ENCODE measurements at regions of chr10 and their contacts with region 1.

Region 1: DNA sequence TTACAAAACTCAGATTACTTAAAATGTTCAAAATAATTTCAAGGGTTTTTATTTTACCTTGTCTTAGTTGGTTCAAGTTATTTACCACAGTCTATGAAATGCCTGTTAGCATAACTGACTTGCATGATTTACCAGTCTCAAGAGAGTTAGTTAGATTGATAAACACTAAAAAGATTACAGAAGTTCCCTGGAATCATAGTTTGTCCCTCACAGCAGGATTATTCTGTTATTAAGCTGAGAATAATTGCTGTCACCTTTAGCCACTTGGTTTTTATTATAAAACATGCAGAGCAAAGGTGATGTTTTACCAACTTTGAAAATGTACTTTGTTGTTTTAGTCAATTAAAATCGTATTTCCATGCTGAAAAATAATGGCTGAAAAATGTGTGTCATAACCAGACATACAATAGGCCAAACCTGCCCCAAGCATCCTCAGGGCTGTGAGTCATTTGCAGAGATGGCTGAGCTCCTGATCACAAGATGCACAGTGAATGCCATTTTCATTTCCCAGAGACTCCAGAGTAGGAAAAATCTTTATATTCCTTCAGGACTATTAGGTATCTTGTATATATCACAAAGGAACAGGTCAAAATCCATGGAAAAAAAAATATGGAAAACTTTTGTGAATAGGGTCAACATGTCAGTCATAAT is 87.8 kb upstream of the DKK1 start:
- DNase-seq: no peak
- H3K4me3 Mint-ChIP-seq: no peak overlapping the region
- H3K27ac Mint-ChIP-seq: no peak overlapping the region
- H3K4me1 Mint-ChIP-seq: no peaks in the 10 kb centered on the region
- H3K27me3 Mint-ChIP-seq: peaks cover 7% of the 10 kb centered on the region

Region 2: GRCh38 chr10:52276982-52277381 is 50.7 kb after region 1 on chr10:
- CTCF ChIA-PET with region 1: no interaction called
- intact Hi-C with region 1: loop called (anchors 1 kb)
- DNase-seq: no peak
- H3K4me3 Mint-ChIP-seq: no peak overlapping the region
- H3K27ac Mint-ChIP-seq: no peak overlapping the region
- H3K4me1 Mint-ChIP-seq: no peaks in the 10 kb centered on the region
- H3K27me3 Mint-ChIP-seq: no peaks in the 10 kb centered on the region

Region 3: DNA sequence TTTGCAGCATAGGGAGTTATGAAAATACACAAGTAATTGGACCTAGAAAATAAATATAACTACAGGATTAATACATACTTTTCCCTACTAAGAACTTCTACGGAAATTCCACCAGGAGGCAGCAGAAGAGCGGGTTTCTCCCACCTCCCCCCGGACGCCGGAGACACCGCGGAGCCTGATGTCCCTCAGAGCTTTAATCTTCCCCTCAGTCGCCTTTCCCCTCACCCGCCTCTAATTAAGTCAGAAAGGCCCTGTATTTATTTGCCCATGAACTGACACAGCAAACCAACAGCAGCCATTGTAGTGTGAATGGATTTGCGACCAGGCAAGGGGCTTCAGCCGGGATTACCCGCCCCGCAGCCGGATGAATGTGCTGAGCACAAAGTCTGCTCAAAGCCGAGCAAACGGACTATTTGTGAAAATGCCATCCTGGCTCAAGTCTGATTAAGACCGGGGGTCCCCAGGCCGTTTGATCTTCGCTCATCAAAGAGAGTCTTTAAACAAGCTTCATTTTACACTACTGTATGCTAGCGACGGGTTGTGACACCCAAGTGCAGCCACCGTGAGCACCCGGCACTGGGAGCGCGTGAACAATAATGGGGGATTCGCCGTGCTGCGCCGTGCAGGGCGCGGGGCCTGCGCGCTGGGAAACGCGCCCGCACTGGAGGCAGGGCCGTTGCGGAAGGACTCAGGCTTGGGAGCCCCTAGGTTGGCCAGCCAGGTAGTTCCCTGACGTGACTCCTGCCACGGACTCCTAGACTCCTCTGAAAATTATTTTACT is 82.1 kb after region 1 on chr10:
- CTCF ChIA-PET with region 1: no interaction called
- intact Hi-C with region 1: no loop called
- DNase-seq: peak; percentile 14
- H3K4me3 Mint-ChIP-seq: no peak overlapping the region
- H3K27ac Mint-ChIP-seq: no peak overlapping the region
- H3K4me1 Mint-ChIP-seq: peaks cover 8% of the 10 kb centered on the region
- H3K27me3 Mint-ChIP-seq: peaks cover 46% of the 10 kb centered on the region

Region 4: DNA sequence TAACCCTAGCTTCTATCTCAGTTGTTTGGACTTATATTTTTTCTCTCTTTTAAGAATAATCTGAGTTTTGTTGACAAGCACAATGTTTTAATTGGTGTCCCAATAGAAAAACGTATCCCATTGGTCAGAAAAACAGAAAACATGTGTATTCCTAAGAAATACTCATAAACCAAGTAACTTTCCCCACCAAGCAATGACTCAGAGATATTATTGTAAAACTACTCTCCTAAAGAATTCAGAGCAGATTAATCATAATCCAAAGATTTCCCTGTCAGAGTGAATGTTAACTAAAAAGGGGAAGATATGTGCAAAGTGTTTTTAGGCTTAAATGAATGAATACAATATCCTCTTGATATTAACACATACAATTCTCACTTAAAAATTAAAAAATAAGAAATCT is 575.6 kb after region 1 on chr10:
- CTCF ChIA-PET with region 1: no interaction called
- intact Hi-C with region 1: no loop called
- DNase-seq: no peak
- H3K4me3 Mint-ChIP-seq: no peak overlapping the region
- H3K27ac Mint-ChIP-seq: no peak overlapping the region
- H3K4me1 Mint-ChIP-seq: no peaks in the 10 kb centered on the region
- H3K27me3 Mint-ChIP-seq: no peaks in the 10 kb centered on the region

Measured in activated naive CD4-positive, alpha-beta T cell treated with anti-CD3 and anti-CD28 coated beads for 36 hours (primary cell).